Activated B cell treated with CpG ODN at 0.5 μM for 24 hours (primary cell): ENCODE measurements at regions of chr7 and their contacts with region 1.

Region 1: GRCh38 chr7:30284298-30285066 is at the start of gene ZNRF2:
- DNase-seq: peak; percentile 95
- ATAC-seq: peak; percentile 82
- H3K4me3 Mint-ChIP-seq: peak within 1 kb of the TSS; percentile 87
- H3K27ac Mint-ChIP-seq: peak within 1 kb of the TSS; percentile 90
- H3K4me1 Mint-ChIP-seq: peaks cover 48% of the 10 kb centered on the region
- H3K27me3 Mint-ChIP-seq: no peaks in the 10 kb centered on the region
- CTCF ChIP-seq: no peak
- total RNA-seq, gene ZNRF2: 18.7 and 21.4 TPM in 2 replicates

Region 2: GRCh38 chr7:30026229-30027064 is 258.0 kb before region 1 on chr7 and contains the start of gene FKBP14:
- CTCF ChIA-PET with region 1: no interaction called
- POLR2A ChIA-PET with region 1: no interaction called
- intact Hi-C with region 1: loop called (anchors 1 kb)
- DNase-seq: peak; percentile 72
- ATAC-seq: peak; percentile 76
- H3K4me3 Mint-ChIP-seq: no peak within 1 kb of the TSS
- H3K27ac Mint-ChIP-seq: peak within 1 kb of the TSS; percentile 91
- H3K4me1 Mint-ChIP-seq: peaks cover 38% of the 10 kb centered on the region
- H3K27me3 Mint-ChIP-seq: no peaks in the 10 kb centered on the region
- CTCF ChIP-seq: no peak
- total RNA-seq, gene FKBP14: 7.7 and 11.4 TPM in 2 replicates

Region 3: DNA sequence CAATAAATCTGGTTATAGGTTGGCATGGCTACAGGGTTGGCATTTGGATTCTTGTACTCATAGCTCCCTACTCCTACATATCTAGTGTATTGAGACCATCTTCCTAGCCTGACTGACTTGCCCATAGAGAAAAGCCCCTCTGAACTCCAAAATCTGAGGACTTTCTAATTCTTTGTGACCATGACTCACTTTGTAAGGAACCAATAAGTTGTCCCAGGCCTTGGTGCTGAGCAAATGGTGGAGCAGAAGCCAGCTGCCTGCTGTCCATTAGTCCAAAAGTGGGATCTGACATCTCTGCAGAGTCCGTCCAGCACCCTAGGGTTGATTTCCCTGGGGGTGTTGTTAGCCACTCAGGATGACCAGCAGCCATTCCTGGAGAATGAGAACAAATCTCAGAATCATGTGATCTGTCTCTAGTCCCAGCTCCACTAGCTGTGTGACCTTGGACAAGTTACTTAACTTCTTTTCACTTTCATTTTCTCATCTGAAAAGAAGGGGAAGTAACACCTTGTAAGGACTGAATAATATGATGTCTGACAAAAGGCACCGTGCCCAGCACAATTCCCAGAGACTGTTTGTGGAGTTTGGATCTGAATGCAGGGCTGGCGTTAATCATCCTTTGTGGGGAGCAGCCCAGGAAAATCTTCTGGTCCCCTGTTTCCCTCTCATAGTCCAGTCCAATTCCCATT is 105.6 kb before region 1 on chr7:
- CTCF ChIA-PET with region 1: no interaction called
- POLR2A ChIA-PET with region 1: interaction called, 4 read pairs
- intact Hi-C with region 1: loop called (anchors 1 kb)
- DNase-seq: no peak
- ATAC-seq: peak; percentile 91
- H3K4me3 Mint-ChIP-seq: peak overlapping the region; percentile 56
- H3K27ac Mint-ChIP-seq: peak overlapping the region; percentile 79
- H3K4me1 Mint-ChIP-seq: peaks cover 47% of the 10 kb centered on the region
- H3K27me3 Mint-ChIP-seq: no peaks in the 10 kb centered on the region
- CTCF ChIP-seq: no peak

Region 4: GRCh38 chr7:30301751-30302150 is 17.3 kb after region 1 on chr7:
- CTCF ChIA-PET with region 1: no interaction called
- POLR2A ChIA-PET with region 1: no interaction called
- intact Hi-C with region 1: loop called (anchors 1 kb)
- DNase-seq: no peak
- ATAC-seq: no peak
- H3K4me3 Mint-ChIP-seq: no peak overlapping the region
- H3K27ac Mint-ChIP-seq: no peak overlapping the region
- H3K4me1 Mint-ChIP-seq: peaks cover 72% of the 10 kb centered on the region
- H3K27me3 Mint-ChIP-seq: no peaks in the 10 kb centered on the region
- CTCF ChIP-seq: no peak

Region 5: DNA sequence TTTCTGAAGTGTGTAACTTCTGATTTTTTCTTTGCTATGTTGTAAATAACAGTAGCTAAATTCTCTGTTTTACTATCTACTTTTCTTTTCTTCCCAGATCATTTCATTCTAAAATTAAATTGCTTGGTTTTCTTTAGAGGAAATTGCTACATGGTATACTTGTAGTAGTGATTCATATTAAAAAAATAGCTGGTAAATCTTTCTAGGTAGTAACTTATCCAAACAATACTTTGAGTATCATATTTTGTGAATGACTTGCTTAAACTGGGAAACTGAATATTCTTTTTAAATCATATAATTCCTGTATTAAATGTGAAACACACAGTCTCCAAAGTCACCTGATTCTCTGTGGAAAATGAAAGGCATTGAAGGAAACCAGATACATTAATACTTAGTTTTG is 85.4 kb after region 1 on chr7:
- CTCF ChIA-PET with region 1: no interaction called
- POLR2A ChIA-PET with region 1: interaction called, 13 read pairs
- intact Hi-C with region 1: no loop called
- DNase-seq: no peak
- ATAC-seq: no peak
- H3K4me3 Mint-ChIP-seq: no peak overlapping the region
- H3K27ac Mint-ChIP-seq: no peak overlapping the region
- H3K4me1 Mint-ChIP-seq: peaks cover under 1% of the 10 kb centered on the region
- H3K27me3 Mint-ChIP-seq: no peaks in the 10 kb centered on the region
- CTCF ChIP-seq: no peak

Region 6: DNA sequence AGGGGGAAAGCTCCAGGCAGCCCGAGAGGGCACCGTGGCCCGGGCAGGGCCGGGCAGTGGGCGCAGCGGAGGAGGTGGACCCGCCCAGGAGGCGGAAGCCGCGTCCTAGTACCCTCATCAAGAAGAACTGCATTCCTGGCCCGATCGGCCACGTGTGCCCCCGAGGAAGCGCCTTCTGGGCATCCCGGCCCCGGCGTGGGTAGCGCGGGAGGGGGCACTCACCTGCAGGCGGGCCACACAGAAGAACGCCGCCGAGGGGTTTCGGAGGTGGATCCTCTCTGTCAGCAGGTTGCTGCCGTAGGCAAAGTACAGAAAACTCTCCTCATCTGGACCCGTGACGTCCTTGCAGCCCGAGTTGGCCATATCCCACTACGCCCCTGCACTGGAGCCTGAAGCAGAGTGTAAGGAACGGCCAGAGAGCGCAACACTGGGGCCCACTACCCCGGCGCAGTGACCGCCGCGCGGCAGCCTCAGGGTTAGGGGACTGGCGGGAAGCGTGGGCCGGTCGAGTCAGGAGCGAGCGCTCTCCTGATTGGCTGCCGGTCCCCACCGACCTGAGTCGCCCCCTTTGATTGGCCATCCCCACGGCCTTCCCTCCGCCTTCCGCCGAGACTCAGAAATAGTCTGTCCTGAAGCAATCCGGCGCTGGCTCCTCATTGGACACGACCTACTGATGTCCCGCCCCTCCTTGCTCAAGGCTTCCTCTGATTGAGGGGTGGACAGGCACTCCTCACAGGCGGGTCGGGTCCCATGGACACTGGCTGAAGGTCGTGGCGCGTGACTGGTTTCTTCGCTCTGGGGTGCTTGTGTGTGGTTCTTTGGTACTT is 220.1 kb after region 1 on chr7 and contains the start of gene GGCT:
- CTCF ChIA-PET with region 1: no interaction called
- POLR2A ChIA-PET with region 1: interaction called, 3 read pairs
- intact Hi-C with region 1: loop called (anchors 1 kb)
- DNase-seq: peak; percentile 87
- ATAC-seq: peak; percentile 98
- H3K4me3 Mint-ChIP-seq: peak within 1 kb of the TSS; percentile 91
- H3K27ac Mint-ChIP-seq: peak within 1 kb of the TSS; percentile 97
- H3K4me1 Mint-ChIP-seq: peaks cover 39% of the 10 kb centered on the region
- H3K27me3 Mint-ChIP-seq: no peaks in the 10 kb centered on the region
- CTCF ChIP-seq: no peak
- total RNA-seq, gene GGCT: 22.7 and 24.4 TPM in 2 replicates

Region 7: GRCh38 chr7:31986944-31987430 is 1702.5 kb after region 1 on chr7:
- CTCF ChIA-PET with region 1: no interaction called
- POLR2A ChIA-PET with region 1: no interaction called
- intact Hi-C with region 1: no loop called
- DNase-seq: no peak
- ATAC-seq: no peak
- H3K4me3 Mint-ChIP-seq: no peak overlapping the region
- H3K27ac Mint-ChIP-seq: no peak overlapping the region
- H3K4me1 Mint-ChIP-seq: no peaks in the 10 kb centered on the region
- H3K27me3 Mint-ChIP-seq: no peaks in the 10 kb centered on the region
- CTCF ChIP-seq: no peak